Prostate gland (tissue), 2 donors: ENCODE measurements at regions of chr11 and their contacts with region 1.

Region 1: GRCh38 chr11:114180301-114181055 is 115.7 kb upstream of the NNMT start:
- DNase-seq: peak; percentile 63
- H3K4me3 ChIP-seq: peak overlapping the region; percentile 21 to 36
- H3K27ac ChIP-seq: peak overlapping the region; percentile 99
- H3K4me1 ChIP-seq: peaks cover 54% of the 10 kb centered on the region
- H3K27me3 ChIP-seq: no peaks in the 10 kb centered on the region
- CTCF ChIP-seq: peak in 3 of 4 experiments; percentile 54 to 83 (median 73)
- POLR2A ChIP-seq: no peak

Region 2: DNA sequence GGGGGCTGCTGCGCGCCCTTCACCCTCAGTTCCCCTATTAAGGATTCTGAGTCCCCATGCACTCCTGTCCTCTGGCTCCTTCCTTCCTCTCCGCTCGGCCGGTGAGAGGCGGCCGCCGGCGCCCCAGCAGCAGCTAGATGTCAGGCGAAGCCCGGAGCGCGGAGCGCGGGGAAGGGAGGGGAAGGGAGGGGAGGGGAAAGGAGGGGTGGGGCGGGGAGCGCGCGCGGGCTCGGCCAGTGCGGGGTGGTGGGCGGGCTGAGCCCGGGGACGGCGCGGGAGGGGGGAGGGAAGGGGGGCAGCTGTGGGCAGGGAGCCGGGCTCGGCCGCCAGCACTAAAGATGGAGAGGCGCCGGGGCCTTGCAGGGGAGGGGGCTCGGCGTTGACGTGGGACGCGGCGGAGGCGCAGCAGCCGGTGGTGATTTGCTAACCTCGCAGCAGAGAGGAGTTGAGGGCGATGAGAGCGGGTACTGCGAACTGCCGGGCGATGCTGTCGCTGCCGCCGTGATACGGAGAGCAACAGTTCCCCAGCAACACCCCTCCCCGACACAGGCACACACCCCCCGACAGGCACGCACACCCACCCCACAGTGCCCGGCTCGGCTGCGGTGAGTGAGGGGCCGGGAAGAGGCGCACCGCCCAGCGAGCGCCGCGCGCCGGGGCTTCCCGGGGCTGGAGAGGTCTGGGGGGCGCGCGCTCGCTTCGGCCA is 121.0 kb before region 1 on chr11 and contains the start of gene ZBTB16:
- intact Hi-C with region 1: loop called (anchors 5 kb)
- DNase-seq: peak; percentile 88
- H3K4me3 ChIP-seq: peak within 1 kb of the TSS; percentile 97 to 99
- H3K27ac ChIP-seq: peak within 1 kb of the TSS; percentile 100
- H3K4me1 ChIP-seq: peaks cover 11% of the 10 kb centered on the region
- H3K27me3 ChIP-seq: no peaks in the 10 kb centered on the region
- CTCF ChIP-seq: peak; percentile 9 to 67 (median 54)
- POLR2A ChIP-seq: peak; percentile 79
- total RNA-seq, gene ZBTB16: 171 to 230 TPM

Region 3: DNA sequence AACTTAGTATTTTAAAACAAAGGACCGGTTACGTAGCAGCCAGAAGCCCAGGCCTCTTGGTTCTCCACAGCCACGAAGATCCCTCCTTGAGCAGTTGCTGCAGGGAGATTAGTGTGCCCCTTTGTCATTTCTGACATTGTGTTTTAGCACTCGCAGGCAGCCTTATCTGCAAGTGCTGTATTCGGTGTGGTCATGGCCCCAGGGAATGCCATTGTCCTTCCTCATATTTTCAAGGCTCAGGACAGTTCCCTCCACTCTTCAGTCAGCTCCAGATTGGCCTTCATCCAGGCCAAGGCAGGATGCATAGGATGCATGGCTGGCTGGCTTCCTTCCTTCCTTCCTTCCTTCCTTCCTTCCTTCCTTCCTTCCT is 32.5 kb before region 1 on chr11:
- intact Hi-C with region 1: no loop called
- DNase-seq: no peak
- H3K4me3 ChIP-seq: no peak overlapping the region
- H3K27ac ChIP-seq: peak overlapping the region; percentile 70 to 99
- H3K4me1 ChIP-seq: peaks cover 31% of the 10 kb centered on the region
- H3K27me3 ChIP-seq: no peaks in the 10 kb centered on the region
- CTCF ChIP-seq: no peak
- POLR2A ChIP-seq: no peak